ENCODE measurements at regions of chr9 and their contacts with region 1.

Region 1: DNA sequence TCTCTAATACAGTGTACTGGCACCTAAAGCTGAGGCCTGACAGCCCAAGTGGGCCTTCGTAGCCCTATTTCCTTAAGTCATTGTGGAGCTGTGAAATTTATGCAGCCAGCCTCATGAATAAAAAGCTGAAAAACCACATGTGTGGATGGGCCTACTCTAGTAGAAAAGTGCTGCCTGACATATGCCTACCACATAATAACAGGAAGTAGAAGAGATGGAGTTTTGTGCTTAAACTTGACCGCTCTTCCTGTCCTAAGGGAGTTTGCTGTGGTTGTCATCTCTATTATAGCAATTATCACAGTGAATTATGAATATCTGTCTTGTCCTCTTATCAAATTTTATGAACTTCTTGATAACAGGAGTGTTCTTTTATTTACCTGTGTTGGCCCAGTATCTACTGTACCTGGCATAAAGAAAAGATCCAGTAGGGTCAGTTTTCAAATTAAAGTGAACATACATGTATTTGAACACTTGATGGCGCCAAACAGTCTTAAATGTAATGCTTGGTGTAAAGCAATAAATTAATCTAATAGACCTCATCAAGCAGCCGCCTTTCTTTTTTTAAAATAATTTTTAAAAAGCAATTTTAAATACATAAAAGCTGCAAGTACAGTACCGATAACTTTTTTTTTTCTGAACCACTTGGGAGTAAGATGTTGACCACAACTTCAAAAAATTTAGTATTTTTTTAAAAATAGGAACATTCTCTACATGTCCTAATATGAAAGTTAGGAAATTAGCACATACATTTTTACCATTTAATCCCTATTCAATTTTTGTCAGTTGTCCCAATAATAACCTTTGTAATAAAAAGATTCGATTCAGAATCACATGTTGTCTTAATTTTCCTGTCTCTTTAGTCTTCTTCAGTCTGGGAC is 51.0 kb downstream of the FKTN start:
- DNase-seq: no peak
- ATAC-seq: peak; percentile 55 to 63
- H3K4me3 ChIP-seq: no peak overlapping the region
- H3K27ac ChIP-seq: no peak overlapping the region
- H3K4me1 ChIP-seq: no peaks in the 10 kb centered on the region
- H3K27me3 ChIP-seq: no peaks in the 10 kb centered on the region
- CTCF ChIP-seq: peak; percentile 30 to 73 (median 48)
- POLR2A ChIP-seq: no peak

Region 2: DNA sequence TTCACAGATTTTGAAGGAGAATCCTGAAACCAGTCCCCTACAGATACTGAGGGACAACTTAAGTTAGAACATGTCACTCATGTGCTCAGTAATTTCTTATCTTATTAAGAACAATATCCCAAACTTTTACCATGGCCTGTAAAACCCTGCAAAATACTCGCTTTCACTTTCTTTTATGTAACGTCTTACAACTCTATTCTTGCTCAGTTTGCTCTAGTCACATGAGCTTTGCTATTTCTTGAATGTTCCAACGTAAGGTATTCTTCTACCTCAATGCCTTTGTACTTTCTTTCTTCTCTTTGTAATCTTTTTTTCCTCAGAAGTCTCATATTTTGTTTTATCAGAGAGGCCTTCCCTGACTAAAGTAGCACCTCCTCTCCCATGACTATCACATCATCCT is 99.4 kb after region 1 on chr9:
- in situ Hi-C with region 1: no loop called
- intact Hi-C with region 1: loop called (anchors 2 kb)
- DNase-seq: no peak
- ATAC-seq: no peak
- H3K4me3 ChIP-seq: peak overlapping the region in 3 of 4 donors; percentile 10 to 24 (median 23)
- H3K27ac ChIP-seq: peak overlapping the region; percentile 79 to 84 (median 82)
- H3K4me1 ChIP-seq: peaks cover 48 to 59% of the 10 kb centered on the region in 2 donors
- H3K27me3 ChIP-seq: no peaks in the 10 kb centered on the region
- CTCF ChIP-seq: no peak
- POLR2A ChIP-seq: no peak

Region 3: GRCh38 chr9:105858006-105858690 is 249.2 kb after region 1 on chr9:
- in situ Hi-C with region 1: loop called in 1 of 4 experiments (anchors 25 kb)
- intact Hi-C with region 1: no loop called
- DNase-seq: no peak
- ATAC-seq: no peak
- H3K4me3 ChIP-seq: no peak overlapping the region
- H3K27ac ChIP-seq: no peak overlapping the region
- H3K4me1 ChIP-seq: peaks cover 14 to 23% of the 10 kb centered on the region in 2 donors
- H3K27me3 ChIP-seq: no peaks in the 10 kb centered on the region
- CTCF ChIP-seq: no peak
- POLR2A ChIP-seq: no peak

Region 4: GRCh38 chr9:105881654-105882349 is 272.8 kb after region 1 on chr9:
- in situ Hi-C with region 1: loop called in 3 of 4 experiments (anchors 5 to 25 kb)
- intact Hi-C with region 1: loop called (anchors 1 kb)
- DNase-seq: peak; percentile 21 to 61
- ATAC-seq: peak; percentile 61 to 79
- H3K4me3 ChIP-seq: no peak overlapping the region
- H3K27ac ChIP-seq: no peak overlapping the region
- H3K4me1 ChIP-seq: no peaks in the 10 kb centered on the region
- H3K27me3 ChIP-seq: no peaks in the 10 kb centered on the region
- CTCF ChIP-seq: peak; percentile 74 to 87 (median 75)
- POLR2A ChIP-seq: no peak

Measured in gastrocnemius medialis (tissue), 4 donors.